ENCODE measurements at regions of chr9 and their contacts with region 1.

Region 1: GRCh38 chr9:17531642-17532254 is 47.1 kb upstream of the SH3GL2 start:
- DNase-seq: peak; percentile 75
- H3K4me3 ChIP-seq: no peak overlapping the region
- H3K27ac ChIP-seq: no peak overlapping the region
- H3K4me1 ChIP-seq: no peaks in the 10 kb centered on the region
- H3K27me3 ChIP-seq: no peaks in the 10 kb centered on the region
- CTCF ChIP-seq: peak; percentile 70 to 74 (median 73)
- EP300 ChIP-seq: no peak
- POLR2A ChIP-seq: no peak

Region 2: DNA sequence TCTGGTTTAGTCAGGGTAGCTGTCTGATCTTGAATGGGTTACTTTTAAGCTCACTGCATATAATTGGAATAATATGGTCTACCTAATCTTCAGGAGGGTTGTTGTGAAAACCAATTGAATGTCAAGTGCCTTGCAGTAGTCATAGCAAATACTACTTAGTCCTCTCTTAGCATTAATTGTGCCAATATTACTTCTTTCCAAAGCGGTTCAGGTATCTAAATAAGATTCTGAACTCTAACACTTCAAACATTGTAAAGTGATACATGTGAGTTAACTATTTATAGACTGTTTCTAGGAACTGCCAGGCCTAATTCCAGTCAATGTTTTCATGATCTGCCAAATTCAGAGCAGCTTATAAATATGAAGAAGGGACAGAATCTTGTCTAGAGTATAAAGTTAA is 187.3 kb after region 1 on chr9:
- intact Hi-C with region 1: no loop called
- DNase-seq: no peak
- H3K4me3 ChIP-seq: no peak overlapping the region
- H3K27ac ChIP-seq: no peak overlapping the region
- H3K4me1 ChIP-seq: peaks cover 0 to 2% (median 0%) of the 10 kb centered on the region in 4 donors
- H3K27me3 ChIP-seq: no peaks in the 10 kb centered on the region
- CTCF ChIP-seq: no peak
- EP300 ChIP-seq: no peak
- POLR2A ChIP-seq: no peak

Region 3: GRCh38 chr9:17802249-17802857 is 270.6 kb after region 1 on chr9:
- intact Hi-C with region 1: loop called (anchors 2 kb)
- DNase-seq: peak; percentile 57
- H3K4me3 ChIP-seq: no peak overlapping the region
- H3K27ac ChIP-seq: no peak overlapping the region
- H3K4me1 ChIP-seq: no peaks in the 10 kb centered on the region
- H3K27me3 ChIP-seq: no peaks in the 10 kb centered on the region
- CTCF ChIP-seq: peak; percentile 46 to 57 (median 52)
- EP300 ChIP-seq: no peak
- POLR2A ChIP-seq: no peak

Region 4: DNA sequence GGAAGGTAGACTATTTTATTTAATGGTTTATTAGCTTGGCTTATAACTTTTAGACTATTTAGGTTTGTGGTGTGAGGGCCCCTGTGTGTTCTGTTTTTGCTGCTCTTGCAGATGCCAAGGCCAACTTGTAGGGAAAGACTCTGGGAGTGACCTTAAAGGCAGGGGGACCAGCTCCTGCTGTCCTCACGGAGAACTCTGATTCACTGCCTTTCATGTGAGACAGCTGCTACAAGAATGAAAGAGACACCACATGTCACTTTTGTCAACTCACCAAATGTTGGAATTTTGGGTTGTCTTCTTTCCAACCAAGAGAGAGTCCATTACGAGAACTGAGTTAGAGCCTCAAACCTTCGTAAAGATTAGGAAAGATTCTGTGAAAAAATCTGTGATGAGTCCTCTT is 683.9 kb after region 1 on chr9:
- intact Hi-C with region 1: loop called (anchors 5 kb)
- DNase-seq: no peak
- H3K4me3 ChIP-seq: no peak overlapping the region
- H3K27ac ChIP-seq: peak overlapping the region in 1 of 4 donors; percentile 28
- H3K4me1 ChIP-seq: peaks cover 0 to 34% (median 21%) of the 10 kb centered on the region in 4 donors
- H3K27me3 ChIP-seq: no peaks in the 10 kb centered on the region
- CTCF ChIP-seq: no peak
- EP300 ChIP-seq: no peak
- POLR2A ChIP-seq: no peak

Region 5: DNA sequence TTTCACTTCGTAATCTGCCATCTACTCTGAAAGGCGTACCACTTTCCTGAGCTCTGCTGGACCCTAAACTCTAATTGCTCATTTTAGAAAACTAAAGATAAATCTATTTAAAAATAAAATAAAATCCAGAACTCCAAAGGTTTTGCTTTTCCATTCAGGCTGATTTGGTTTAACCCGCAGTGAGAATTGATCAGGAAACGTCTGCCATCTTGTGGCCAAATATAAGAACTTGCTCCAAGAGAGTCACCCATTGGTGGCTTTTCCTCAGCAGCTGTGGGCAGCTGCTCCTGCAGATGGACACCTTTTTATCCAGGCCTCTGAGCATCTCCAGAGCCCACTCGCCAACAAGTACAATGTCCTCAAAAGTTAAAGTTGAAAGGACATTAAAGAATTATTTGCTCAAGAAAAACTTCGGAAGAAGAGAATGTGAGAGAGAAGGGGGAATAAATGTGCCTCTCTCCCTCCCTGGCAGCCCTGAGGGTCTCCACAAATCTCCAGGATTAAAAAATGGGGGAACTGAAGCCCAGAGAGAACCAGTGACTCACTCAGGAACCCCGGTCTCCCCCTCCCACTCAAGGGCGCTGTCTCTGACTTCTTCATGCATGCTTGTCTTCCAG is 1497.2 kb after region 1 on chr9:
- intact Hi-C with region 1: loop called (anchors 5 kb)
- DNase-seq: no peak
- H3K4me3 ChIP-seq: no peak overlapping the region
- H3K27ac ChIP-seq: no peak overlapping the region
- H3K4me1 ChIP-seq: no peaks in the 10 kb centered on the region
- H3K27me3 ChIP-seq: peaks cover 0 to 4% (median 0%) of the 10 kb centered on the region in 4 donors
- CTCF ChIP-seq: peak; percentile 77 to 80 (median 78)
- EP300 ChIP-seq: no peak
- POLR2A ChIP-seq: no peak